Pancreas (tissue), 10 donors: ENCODE measurements at regions of chr15 and their contacts with region 1.

Region 1: DNA sequence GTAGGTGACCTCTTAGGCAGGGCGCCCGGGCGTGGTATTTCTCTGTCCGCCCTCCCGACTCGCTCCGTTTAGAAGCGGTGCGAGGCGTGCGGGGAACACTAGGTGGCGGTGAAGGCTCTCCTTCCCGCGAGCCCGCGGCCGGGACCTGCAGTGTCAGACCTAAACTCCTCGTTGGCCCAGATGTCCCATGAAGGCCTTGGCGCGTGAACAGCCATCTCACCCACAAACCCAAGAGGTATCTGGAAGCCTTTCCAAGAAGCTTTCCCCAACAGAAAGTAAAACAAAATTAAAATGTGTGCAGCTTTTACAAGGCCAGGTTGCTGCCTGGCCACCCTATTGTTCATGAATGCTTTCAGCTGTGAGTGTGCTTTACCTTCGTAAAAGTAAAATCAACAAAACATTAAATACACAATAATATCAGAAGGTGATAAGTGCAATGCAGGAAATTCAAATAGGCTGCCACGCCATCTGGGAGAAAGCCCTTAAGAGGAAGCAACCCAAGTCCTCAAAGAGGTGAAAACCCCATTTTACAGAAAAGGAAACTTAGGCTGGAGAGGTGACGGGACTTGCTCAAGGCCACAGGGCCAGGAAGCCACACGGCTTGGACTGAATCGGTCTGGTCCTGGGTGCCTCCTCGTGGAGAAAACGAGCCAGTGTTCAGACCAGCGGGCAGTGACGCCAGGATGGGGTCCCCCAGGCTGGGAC is 120.3 kb downstream of the ETFA start:
- DNase-seq: peak; percentile 66 to 92 (median 84)
- ATAC-seq: peak; percentile 92 to 97 (median 96)
- H3K4me3 ChIP-seq: peak overlapping the region in 1 of 4 donors; percentile 25
- H3K27ac ChIP-seq: peak overlapping the region in 2 of 4 donors; percentile 39 to 41
- H3K4me1 ChIP-seq: peaks cover 0 to under 1% (median 0%) of the 10 kb centered on the region in 3 donors
- H3K27me3 ChIP-seq: no peaks in the 10 kb centered on the region
- CTCF ChIP-seq: peak; percentile 64 to 88 (median 76)

Region 2: DNA sequence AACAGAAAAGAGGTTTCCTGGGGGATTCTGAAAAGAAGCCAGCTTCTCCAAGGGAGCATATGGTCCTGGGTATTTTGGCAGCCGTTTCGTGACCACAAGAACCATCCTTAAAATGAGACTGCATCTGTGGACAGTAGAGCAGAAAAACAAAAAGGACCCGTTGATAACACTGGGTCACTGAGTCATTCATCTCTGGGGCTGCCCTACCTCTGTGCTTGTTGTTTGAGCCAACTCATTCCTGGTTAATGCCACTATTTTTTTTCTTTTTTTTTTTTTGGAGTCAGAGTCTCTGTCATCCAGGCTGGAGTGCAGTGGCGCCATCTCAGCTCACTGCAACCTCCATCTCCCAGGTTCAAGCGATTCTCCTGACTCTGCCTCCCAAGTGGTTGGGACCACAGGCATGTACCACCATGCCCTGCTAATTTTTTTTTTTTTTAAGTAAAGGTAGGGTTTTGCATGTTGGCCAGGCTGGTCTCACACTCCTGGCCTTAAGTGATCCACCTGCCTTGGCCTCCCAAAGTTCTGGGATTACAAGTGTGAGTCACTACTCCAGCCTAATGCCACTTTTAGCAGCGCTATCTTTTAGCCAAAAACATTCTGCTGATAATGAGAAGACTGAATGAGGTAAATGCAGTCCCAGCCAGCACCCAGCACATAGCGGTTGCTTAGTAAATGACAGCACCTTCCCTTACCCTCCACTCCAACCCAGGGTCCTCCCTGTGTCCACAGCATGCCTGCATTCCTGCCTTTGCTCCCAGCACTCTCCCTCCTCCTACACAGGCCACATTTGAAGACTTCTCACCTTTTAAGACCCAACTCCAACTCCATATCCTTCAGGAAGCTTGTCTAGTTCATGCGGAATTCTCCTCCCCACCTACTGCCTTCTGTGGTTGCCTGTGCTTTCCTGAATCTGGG is 136.5 kb after region 1 on chr15:
- intact Hi-C with region 1: loop called in 1 of 3 experiments (anchors 5 kb)
- DNase-seq: no peak
- ATAC-seq: no peak
- H3K4me3 ChIP-seq: no peak overlapping the region
- H3K27ac ChIP-seq: no peak overlapping the region
- H3K4me1 ChIP-seq: no peaks in the 10 kb centered on the region
- H3K27me3 ChIP-seq: no peaks in the 10 kb centered on the region
- CTCF ChIP-seq: no peak